ENCODE measurements at regions of chr11 and their contacts with region 1.

Region 1: GRCh38 chr11:76919887-76920746 is 59.4 kb downstream of the ACER3 start:
- DNase-seq: peak; percentile 82
- H3K4me3 Mint-ChIP-seq: no peak overlapping the region
- H3K27ac Mint-ChIP-seq: no peak overlapping the region
- H3K4me1 Mint-ChIP-seq: no peaks in the 10 kb centered on the region
- H3K27me3 Mint-ChIP-seq: no peaks in the 10 kb centered on the region
- CTCF ChIP-seq: peak; percentile 79

Region 2: GRCh38 chr11:76408171-76408965 is 511.7 kb before region 1 on chr11:
- CTCF ChIA-PET with region 1: no interaction called
- POLR2A ChIA-PET with region 1: no interaction called
- intact Hi-C with region 1: no loop called
- DNase-seq: no peak
- H3K4me3 Mint-ChIP-seq: no peak overlapping the region
- H3K27ac Mint-ChIP-seq: no peak overlapping the region
- H3K4me1 Mint-ChIP-seq: no peaks in the 10 kb centered on the region
- H3K27me3 Mint-ChIP-seq: peaks cover 19% of the 10 kb centered on the region
- CTCF ChIP-seq: no peak

Region 3: GRCh38 chr11:76721755-76722677 is 198.1 kb before region 1 on chr11:
- CTCF ChIA-PET with region 1: interaction called, 69 read pairs
- POLR2A ChIA-PET with region 1: no interaction called
- intact Hi-C with region 1: no loop called
- DNase-seq: peak; percentile 75
- H3K4me3 Mint-ChIP-seq: no peak overlapping the region
- H3K27ac Mint-ChIP-seq: no peak overlapping the region
- H3K4me1 Mint-ChIP-seq: no peaks in the 10 kb centered on the region
- H3K27me3 Mint-ChIP-seq: peaks cover 36% of the 10 kb centered on the region
- CTCF ChIP-seq: peak; percentile 81

Region 4: GRCh38 chr11:76799066-76799804 is 120.9 kb before region 1 on chr11:
- CTCF ChIA-PET with region 1: interaction called, 102 read pairs
- POLR2A ChIA-PET with region 1: no interaction called
- intact Hi-C with region 1: no loop called
- DNase-seq: peak; percentile 77
- H3K4me3 Mint-ChIP-seq: no peak overlapping the region
- H3K27ac Mint-ChIP-seq: no peak overlapping the region
- H3K4me1 Mint-ChIP-seq: peaks cover 30% of the 10 kb centered on the region
- H3K27me3 Mint-ChIP-seq: no peaks in the 10 kb centered on the region
- CTCF ChIP-seq: peak; percentile 85

Region 5: DNA sequence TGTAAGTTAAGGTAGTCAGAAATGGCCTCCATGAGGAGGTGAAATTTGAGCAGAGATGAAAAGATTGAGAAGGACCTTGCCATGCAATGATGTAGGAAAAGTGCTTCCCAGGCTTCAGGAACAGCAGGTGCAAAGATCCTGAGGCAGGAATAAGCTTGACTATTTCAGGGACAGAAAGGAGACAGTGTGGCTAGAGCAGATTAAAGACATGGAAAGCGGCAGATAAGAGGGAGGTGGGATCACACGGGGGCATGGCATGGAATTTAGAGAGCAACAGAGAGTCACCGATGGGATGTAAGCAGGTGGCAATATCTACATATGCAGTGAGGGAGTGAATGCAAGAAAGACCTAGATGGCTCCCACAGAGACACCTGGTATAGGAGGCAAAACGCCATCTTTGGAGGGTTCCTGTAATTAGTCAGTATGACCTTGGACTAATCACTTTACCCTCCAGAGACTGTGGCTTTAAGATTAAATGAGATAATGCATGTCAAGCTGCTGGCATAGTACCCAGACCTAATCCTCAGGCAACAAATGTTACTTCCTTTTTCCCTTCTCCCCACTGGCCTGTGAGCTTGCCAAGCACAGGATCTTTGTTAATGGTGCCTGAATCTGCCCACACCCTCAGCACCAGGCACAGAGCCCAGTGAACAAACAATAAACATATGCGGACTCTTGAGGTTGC is 84.0 kb before region 1 on chr11:
- CTCF ChIA-PET with region 1: interaction called, 20 read pairs
- POLR2A ChIA-PET with region 1: interaction called, 3 read pairs
- intact Hi-C with region 1: no loop called
- DNase-seq: peak; percentile 94
- H3K4me3 Mint-ChIP-seq: no peak overlapping the region
- H3K27ac Mint-ChIP-seq: no peak overlapping the region
- H3K4me1 Mint-ChIP-seq: peaks cover 5% of the 10 kb centered on the region
- H3K27me3 Mint-ChIP-seq: peaks cover 2% of the 10 kb centered on the region
- CTCF ChIP-seq: no peak

Region 6: GRCh38 chr11:76892306-76892705 is 27.8 kb before region 1 on chr11:
- CTCF ChIA-PET with region 1: interaction called, 13 read pairs
- POLR2A ChIA-PET with region 1: no interaction called
- intact Hi-C with region 1: no loop called
- DNase-seq: no peak
- H3K4me3 Mint-ChIP-seq: no peak overlapping the region
- H3K27ac Mint-ChIP-seq: no peak overlapping the region
- H3K4me1 Mint-ChIP-seq: no peaks in the 10 kb centered on the region
- H3K27me3 Mint-ChIP-seq: no peaks in the 10 kb centered on the region
- CTCF ChIP-seq: no peak

Region 7: GRCh38 chr11:77047007-77047927 is 127.2 kb after region 1 on chr11:
- CTCF ChIA-PET with region 1: interaction called, 13 read pairs
- POLR2A ChIA-PET with region 1: interaction called, 4 read pairs
- intact Hi-C with region 1: loop called (anchors 2 kb)
- DNase-seq: peak; percentile 93
- H3K4me3 Mint-ChIP-seq: peak overlapping the region; percentile 68
- H3K27ac Mint-ChIP-seq: no peak overlapping the region
- H3K4me1 Mint-ChIP-seq: peaks cover 12% of the 10 kb centered on the region
- H3K27me3 Mint-ChIP-seq: no peaks in the 10 kb centered on the region
- CTCF ChIP-seq: peak; percentile 63